Heart left ventricle (tissue), 16 donors: ENCODE measurements at regions of chr3 and their contacts with region 1.

Region 1: GRCh38 chr3:60169755-60170154 is 1081.5 kb downstream of the FHIT start:
- DNase-seq: no peak
- ATAC-seq: no peak
- H3K4me3 ChIP-seq: no peak overlapping the region
- H3K27ac ChIP-seq: no peak overlapping the region
- H3K4me1 ChIP-seq: peaks cover 0 to 7% (median 0%) of the 10 kb centered on the region in 12 donors
- H3K27me3 ChIP-seq: no peaks in the 10 kb centered on the region
- CTCF ChIP-seq: no peak
- POLR2A ChIP-seq: no peak

Region 2: DNA sequence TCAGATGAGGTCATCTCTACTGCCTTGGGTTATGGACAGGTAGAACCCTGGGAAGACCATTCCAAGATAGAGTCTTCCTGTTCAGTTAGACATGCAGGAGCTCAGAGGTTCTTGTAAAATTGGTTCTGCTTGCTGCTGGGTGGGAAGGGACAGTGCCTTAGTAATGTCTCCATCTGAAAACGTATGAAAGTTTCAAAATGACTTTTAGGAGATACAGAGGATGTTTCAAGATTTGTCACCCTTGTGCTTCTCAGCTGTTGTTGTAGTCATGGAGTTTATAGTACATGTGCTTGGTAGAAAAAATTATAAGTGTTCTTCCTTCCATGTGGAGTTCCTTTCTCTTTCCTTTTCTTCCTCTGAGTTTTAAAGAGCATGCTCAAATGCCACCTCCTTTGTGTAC is 234.7 kb before region 1 on chr3:
- intact Hi-C with region 1: loop called in 1 of 10 experiments (anchors 5 kb)
- DNase-seq: no peak
- ATAC-seq: no peak
- H3K4me3 ChIP-seq: no peak overlapping the region
- H3K27ac ChIP-seq: no peak overlapping the region
- H3K4me1 ChIP-seq: peaks cover 0 to 4% (median 0%) of the 10 kb centered on the region in 12 donors
- H3K27me3 ChIP-seq: no peaks in the 10 kb centered on the region
- CTCF ChIP-seq: no peak
- POLR2A ChIP-seq: no peak

Region 3: DNA sequence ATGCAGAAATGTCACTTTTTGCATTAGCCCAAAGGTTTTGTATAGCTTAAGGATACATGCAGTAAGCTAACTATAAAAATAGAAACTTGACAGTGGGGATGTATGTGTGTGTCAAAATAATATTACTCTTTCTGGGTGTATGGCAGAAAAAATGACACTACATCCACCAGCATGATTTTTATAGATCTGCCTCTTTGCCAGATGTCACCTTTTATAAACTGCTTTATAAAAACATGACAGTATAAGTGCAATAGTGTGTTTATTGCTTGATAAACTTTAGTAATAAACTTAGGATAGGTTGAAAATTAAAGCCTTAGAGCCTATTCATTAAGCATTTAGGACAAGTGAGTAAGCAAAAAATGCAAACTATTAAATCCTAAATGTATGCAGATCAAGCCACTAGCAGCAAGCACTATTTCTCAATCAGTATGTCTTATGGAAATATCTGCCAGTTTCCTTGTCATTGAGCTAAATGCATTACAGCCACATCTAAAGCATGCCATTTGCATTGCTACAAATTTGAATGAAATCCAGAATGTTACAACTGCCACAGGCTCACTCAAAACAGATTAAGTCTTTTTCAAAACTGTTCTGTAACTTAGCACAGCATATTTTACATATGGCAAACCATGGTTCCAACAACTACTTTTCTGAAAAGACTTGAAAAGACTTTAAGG is 146.5 kb after region 1 on chr3:
- intact Hi-C with region 1: no loop called
- DNase-seq: no peak
- ATAC-seq: no peak
- H3K4me3 ChIP-seq: no peak overlapping the region
- H3K27ac ChIP-seq: no peak overlapping the region
- H3K4me1 ChIP-seq: no peaks in the 10 kb centered on the region
- H3K27me3 ChIP-seq: no peaks in the 10 kb centered on the region
- CTCF ChIP-seq: no peak
- POLR2A ChIP-seq: no peak